Activated B cell treated with CpG ODN at 0.5 μM for 24 hours (primary cell): ENCODE measurements at regions of chr1 and their contacts with region 1.

Region 1: DNA sequence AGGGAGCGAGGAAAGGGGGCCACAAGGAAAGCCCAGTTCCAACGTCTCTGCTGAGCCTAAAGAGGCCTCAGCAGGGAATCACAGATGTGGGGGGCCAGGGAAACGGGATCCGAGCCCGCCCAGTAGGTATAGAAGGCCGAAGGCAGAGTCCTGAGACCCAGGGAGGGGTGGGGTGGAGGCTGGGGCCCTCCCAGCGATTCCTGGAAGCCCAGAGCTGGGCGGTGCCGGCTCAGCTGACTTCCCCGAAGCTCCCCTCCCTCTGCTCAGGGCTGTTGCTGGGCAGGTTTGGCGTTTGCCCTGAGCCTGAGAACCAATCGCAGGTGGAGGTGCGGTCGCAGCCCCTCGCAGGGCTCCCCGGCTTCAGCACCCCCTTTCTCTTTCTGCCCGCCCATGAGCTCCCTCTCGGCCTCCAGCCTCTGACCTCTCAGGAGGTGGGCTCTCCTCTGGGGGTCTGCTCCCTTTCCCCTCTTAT is 12.8 kb downstream of the ADAMTSL4 start:
- DNase-seq: peak; percentile 79
- ATAC-seq: peak; percentile 43
- H3K4me3 Mint-ChIP-seq: peak overlapping the region; percentile 96
- H3K27ac Mint-ChIP-seq: peak overlapping the region; percentile 98
- H3K4me1 Mint-ChIP-seq: peaks cover 63% of the 10 kb centered on the region
- H3K27me3 Mint-ChIP-seq: no peaks in the 10 kb centered on the region
- CTCF ChIP-seq: no peak

Region 2: DNA sequence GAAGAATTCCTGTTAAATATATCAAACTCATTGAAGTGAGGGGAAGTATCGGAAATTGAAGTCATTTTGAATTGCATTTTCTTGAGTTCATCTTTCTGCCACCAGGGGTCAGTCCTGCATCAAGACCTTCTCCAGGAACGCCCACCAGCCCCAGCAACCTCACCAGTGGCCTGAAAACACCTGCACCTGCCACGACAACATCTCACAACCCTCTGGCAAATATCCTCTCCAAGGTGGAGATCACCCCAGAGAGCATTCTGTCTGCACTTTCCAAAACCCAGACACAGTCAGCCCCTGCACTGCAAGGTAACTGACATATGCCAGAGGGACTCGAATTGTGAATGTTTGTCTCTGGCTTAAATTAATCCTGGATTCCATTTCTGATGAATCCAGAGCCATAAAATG is 97.6 kb before region 1 on chr1:
- CTCF ChIA-PET with region 1: interaction called, 7 read pairs
- POLR2A ChIA-PET with region 1: no interaction called
- intact Hi-C with region 1: loop called (anchors 1 kb)
- DNase-seq: peak; percentile 32
- ATAC-seq: peak; percentile 80
- H3K4me3 Mint-ChIP-seq: no peak overlapping the region
- H3K27ac Mint-ChIP-seq: no peak overlapping the region
- H3K4me1 Mint-ChIP-seq: peaks cover 4% of the 10 kb centered on the region
- H3K27me3 Mint-ChIP-seq: no peaks in the 10 kb centered on the region
- CTCF ChIP-seq: no peak

Region 3: DNA sequence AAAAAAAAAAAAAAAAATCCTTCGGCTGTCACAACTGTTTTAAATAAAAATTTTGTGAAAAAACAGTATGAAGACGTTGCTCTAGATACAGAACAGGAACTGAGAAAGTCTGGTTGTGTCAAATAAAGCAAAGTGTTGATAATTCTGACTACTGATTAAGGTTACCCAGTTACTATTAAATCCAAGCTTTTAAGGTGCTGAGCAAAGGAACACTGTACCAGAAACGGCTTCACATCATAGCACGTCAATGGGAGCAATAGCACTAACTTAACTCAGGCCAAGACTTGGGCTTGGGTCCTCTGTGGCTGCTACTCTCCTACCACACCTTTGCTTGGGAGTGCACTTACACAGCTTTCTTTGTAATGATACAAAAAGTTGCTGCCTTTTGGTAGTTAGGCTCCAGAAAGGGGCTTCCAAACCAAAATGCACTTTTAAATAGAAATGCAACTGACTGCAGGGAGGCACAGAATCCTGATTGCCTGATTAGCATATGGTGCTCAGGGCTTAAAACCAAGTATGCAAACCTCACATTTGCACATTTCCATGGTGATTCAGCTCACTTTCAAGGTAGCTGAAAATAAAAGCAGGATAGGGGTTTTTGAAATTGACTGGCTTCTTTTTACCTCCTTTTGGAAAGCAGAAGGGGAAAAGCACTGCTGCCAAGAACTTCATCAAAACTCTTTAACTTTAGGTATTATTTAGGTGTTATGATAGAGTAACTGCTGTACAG is 11.1 kb after region 1 on chr1:
- CTCF ChIA-PET with region 1: interaction called, 196 read pairs
- POLR2A ChIA-PET with region 1: interaction called, 1,106 read pairs
- intact Hi-C with region 1: loop called (anchors 1 kb)
- DNase-seq: no peak
- ATAC-seq: peak; percentile 60
- H3K4me3 Mint-ChIP-seq: peak overlapping the region; percentile 70
- H3K27ac Mint-ChIP-seq: peak overlapping the region; percentile 88
- H3K4me1 Mint-ChIP-seq: peaks cover 90% of the 10 kb centered on the region
- H3K27me3 Mint-ChIP-seq: no peaks in the 10 kb centered on the region
- CTCF ChIP-seq: no peak

Region 4: GRCh38 chr1:150621497-150622302 is 59.7 kb after region 1 on chr1:
- CTCF ChIA-PET with region 1: interaction called, 358 read pairs
- POLR2A ChIA-PET with region 1: interaction called, 272 read pairs
- intact Hi-C with region 1: loop called (anchors 1 kb)
- DNase-seq: no peak
- ATAC-seq: peak; percentile 82
- H3K4me3 Mint-ChIP-seq: peak overlapping the region; percentile 28
- H3K27ac Mint-ChIP-seq: peak overlapping the region; percentile 82
- H3K4me1 Mint-ChIP-seq: peaks cover 36% of the 10 kb centered on the region
- H3K27me3 Mint-ChIP-seq: no peaks in the 10 kb centered on the region
- CTCF ChIP-seq: no peak

Region 5: DNA sequence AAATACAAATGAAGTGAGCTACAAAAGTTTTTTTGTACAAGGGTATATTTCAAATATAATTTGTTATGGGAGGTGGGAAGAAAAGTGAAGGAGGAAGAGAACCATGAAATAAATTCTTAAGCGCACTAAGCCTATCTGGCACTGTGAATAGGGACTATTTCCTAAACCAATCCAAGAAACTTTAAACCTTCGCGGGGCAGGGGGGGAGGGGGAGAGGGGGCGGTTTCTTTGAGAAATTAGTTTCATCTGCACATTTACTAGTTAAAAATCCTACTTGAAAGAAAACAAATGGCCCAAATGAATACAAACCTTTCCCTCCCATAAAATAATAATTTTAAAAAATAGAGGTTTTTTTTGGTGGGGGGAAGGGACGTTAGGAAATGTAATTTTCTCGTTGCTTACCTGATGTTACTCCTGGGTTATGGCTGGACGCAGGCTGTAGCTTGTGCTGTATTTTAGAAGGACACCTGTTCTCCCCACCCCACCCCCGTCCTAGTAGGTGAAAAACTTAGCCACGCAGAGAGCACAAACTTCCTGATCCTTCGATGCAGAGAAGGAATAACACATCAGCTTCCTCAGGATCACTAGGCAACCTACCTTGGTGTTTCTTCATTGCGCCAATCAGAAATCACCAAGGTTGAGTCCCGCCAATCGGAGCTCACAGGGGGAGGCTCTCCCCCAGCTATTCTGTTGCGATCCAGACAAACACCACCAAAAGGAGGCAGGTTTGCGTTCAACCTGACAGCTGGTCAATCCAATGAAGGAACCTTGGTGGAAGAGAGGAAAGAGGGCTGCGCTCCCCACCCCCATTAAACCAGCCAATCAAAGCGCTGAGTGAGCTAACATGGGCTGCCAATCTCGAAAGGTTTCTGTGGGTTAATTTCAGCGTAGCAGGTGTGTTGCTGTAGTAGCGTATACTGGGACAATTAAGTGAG is 134.8 kb after region 1 on chr1 and contains the start of gene GOLPH3L:
- CTCF ChIA-PET with region 1: interaction called, 6 read pairs
- POLR2A ChIA-PET with region 1: interaction called, 21 read pairs
- intact Hi-C with region 1: loop called (anchors 1 kb)
- DNase-seq: peak; percentile 63
- ATAC-seq: peak; percentile 99
- H3K4me3 Mint-ChIP-seq: peak within 1 kb of the TSS; percentile 99
- H3K27ac Mint-ChIP-seq: peak within 1 kb of the TSS; percentile 96
- H3K4me1 Mint-ChIP-seq: peaks cover 23% of the 10 kb centered on the region
- H3K27me3 Mint-ChIP-seq: no peaks in the 10 kb centered on the region
- CTCF ChIP-seq: no peak
- total RNA-seq, gene GOLPH3L: 19.7 and 22.5 TPM in 2 replicates

Region 6: GRCh38 chr1:150925816-150926741 is 364.1 kb after region 1 on chr1 and contains the start of gene SETDB1:
- CTCF ChIA-PET with region 1: interaction called, 5 read pairs
- POLR2A ChIA-PET with region 1: no interaction called
- intact Hi-C with region 1: loop called (anchors 2 kb)
- DNase-seq: peak; percentile 79
- ATAC-seq: peak; percentile 90
- H3K4me3 Mint-ChIP-seq: peak within 1 kb of the TSS; percentile 98
- H3K27ac Mint-ChIP-seq: peak within 1 kb of the TSS; percentile 98
- H3K4me1 Mint-ChIP-seq: peaks cover 35% of the 10 kb centered on the region
- H3K27me3 Mint-ChIP-seq: no peaks in the 10 kb centered on the region
- CTCF ChIP-seq: no peak
- total RNA-seq, gene SETDB1: 101 and 105 TPM in 2 replicates

Region 7: GRCh38 chr1:150955280-150955679 is 393.3 kb after region 1 on chr1:
- CTCF ChIA-PET with region 1: no interaction called
- POLR2A ChIA-PET with region 1: no interaction called
- intact Hi-C with region 1: no loop called
- DNase-seq: no peak
- ATAC-seq: no peak
- H3K4me3 Mint-ChIP-seq: no peak overlapping the region
- H3K27ac Mint-ChIP-seq: peak overlapping the region; percentile 6
- H3K4me1 Mint-ChIP-seq: no peaks in the 10 kb centered on the region
- H3K27me3 Mint-ChIP-seq: no peaks in the 10 kb centered on the region
- CTCF ChIP-seq: no peak